Mucosa of descending colon (tissue), 3 donors: ENCODE measurements at regions of chr3 and their contacts with region 1.

Region 1: GRCh38 chr3:66567077-66567476 is 66.3 kb upstream of the LRIG1 start:
- DNase-seq: no peak
- ATAC-seq: no peak
- H3K4me3 ChIP-seq: no peak overlapping the region
- H3K4me1 ChIP-seq: no peaks in the 10 kb centered on the region
- CTCF ChIP-seq: no peak

Region 2: DNA sequence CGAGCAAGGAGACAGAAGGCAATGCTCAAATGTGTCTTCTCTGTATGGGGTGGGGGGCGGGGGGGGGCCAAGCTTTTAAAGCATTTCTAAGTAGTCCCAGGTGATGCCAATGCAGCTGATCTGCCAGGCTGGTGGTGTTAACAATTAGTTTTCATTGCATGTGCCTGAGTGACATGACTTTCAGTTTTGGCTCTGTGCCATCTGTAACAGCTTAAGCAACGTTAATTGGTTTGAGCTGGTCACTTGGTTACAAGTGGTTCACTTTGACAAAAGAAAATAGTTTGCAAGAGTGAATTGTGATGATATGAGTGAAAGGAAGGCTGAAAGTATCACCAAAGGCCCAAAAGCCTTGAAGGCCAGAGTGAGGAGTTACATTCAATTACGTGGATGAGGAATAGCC is 39.8 kb before region 1 on chr3:
- intact Hi-C with region 1: no loop called
- DNase-seq: no peak
- ATAC-seq: no peak
- H3K4me3 ChIP-seq: no peak overlapping the region
- H3K4me1 ChIP-seq: no peaks in the 10 kb centered on the region
- CTCF ChIP-seq: no peak

Region 3: GRCh38 chr3:66693461-66694031 is 126.5 kb after region 1 on chr3:
- intact Hi-C with region 1: loop called in 1 of 2 experiments (anchors 10 kb)
- DNase-seq: peak in 2 of 3 donors; percentile 50 to 71
- ATAC-seq: peak; percentile 45
- H3K4me3 ChIP-seq: no peak overlapping the region
- H3K4me1 ChIP-seq: no peaks in the 10 kb centered on the region
- CTCF ChIP-seq: no peak

Region 4: DNA sequence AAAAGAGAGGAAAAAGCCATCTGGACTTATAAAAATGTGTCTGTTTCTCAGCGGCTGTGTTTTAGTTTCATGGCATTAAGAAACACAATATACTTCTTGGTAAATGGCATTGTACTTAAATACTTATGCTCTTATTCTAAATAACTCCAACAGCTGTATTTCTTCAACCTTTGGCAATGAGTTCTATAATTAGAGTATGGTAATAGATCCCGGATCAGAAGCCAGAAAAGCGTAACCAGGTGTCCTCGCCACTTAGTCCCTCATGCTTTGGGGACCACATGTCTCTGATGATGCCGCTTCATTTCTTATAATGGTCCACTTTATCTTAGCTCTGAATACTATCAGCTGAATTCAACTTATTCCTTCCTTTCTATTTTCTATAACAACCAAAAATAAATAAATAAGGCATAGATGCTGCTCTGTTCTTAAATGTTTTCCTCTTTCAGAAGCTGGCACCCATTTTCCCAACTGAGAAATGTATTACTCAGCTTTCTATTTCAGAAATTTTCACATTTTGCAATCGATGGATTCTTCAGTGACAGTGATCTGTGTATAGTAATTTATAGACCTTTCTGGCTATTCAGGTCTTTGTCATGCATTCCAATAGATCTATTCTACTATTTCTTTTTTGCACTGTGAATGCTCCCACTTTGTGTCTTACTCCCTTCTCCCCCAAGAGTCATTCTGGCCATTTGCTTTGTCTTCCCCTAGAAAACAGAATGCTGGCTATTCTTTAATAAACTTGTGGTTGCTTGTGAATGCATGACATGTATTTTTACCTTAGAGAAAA is 343.4 kb after region 1 on chr3:
- intact Hi-C with region 1: no loop called
- DNase-seq: no peak
- ATAC-seq: no peak
- H3K4me3 ChIP-seq: no peak overlapping the region
- H3K4me1 ChIP-seq: no peaks in the 10 kb centered on the region
- CTCF ChIP-seq: no peak